ENCODE measurements at regions of chr15 and their contacts with region 1.

Region 1: GRCh38 chr15:48975472-48976419 is 12.0 kb upstream of the SHC4 start:
- DNase-seq: peak; percentile 82
- ATAC-seq: peak; percentile 99
- H3K4me3 Mint-ChIP-seq: peak overlapping the region; percentile 58
- H3K27ac Mint-ChIP-seq: peak overlapping the region; percentile 51
- H3K4me1 Mint-ChIP-seq: peaks cover 11% of the 10 kb centered on the region
- H3K27me3 Mint-ChIP-seq: peaks cover 14% of the 10 kb centered on the region

Region 2: DNA sequence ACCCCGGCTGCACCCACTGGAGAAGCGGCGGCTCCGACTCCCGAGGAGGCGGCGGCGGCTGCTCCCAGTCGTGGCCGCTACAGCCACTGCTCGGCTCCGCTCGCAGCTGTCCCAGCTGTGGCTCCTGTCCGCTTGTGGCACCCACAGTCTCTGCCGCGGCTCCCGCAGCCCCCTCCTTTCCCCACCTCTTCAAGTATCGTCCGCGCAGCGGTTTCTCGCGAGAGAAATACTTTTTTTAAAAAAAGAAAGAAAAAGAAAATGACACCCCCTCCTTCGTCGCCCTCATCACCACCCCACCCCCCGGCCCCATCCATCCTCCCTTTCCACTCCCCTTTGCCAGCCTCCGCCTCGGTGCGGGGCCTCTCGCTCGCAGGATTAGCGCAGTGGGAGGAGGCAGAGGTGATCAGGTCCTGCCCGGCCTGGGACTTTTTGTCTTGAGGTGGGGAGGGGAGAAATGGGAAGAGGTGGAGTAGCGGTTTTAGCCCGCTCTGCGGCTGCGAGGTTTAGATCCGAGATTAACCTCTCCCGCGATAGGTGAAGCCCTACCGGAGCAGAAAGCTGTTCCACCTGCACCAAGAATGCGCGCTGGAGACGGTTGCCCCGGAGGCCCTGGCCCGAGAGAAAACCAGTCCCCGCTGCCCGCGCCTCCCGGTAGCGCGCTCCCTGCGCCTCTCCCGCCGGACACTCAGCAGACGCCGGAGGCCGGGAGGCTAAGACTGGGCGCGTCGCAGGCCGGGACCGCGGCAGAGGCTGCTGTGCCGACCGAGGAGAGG is 330.0 kb before region 1 on chr15 and contains the start of gene FBN1:
- CTCF ChIA-PET with region 1: no interaction called
- POLR2A ChIA-PET with region 1: no interaction called
- DNase-seq: peak; percentile 55
- ATAC-seq: peak; percentile 79
- H3K4me3 Mint-ChIP-seq: peak within 1 kb of the TSS; percentile 70
- H3K27ac Mint-ChIP-seq: no peak within 1 kb of the TSS
- H3K4me1 Mint-ChIP-seq: peaks cover 2% of the 10 kb centered on the region
- H3K27me3 Mint-ChIP-seq: peaks cover 51% of the 10 kb centered on the region
- total RNA-seq, gene FBN1: 0.81 to 1.3 TPM

Region 3: DNA sequence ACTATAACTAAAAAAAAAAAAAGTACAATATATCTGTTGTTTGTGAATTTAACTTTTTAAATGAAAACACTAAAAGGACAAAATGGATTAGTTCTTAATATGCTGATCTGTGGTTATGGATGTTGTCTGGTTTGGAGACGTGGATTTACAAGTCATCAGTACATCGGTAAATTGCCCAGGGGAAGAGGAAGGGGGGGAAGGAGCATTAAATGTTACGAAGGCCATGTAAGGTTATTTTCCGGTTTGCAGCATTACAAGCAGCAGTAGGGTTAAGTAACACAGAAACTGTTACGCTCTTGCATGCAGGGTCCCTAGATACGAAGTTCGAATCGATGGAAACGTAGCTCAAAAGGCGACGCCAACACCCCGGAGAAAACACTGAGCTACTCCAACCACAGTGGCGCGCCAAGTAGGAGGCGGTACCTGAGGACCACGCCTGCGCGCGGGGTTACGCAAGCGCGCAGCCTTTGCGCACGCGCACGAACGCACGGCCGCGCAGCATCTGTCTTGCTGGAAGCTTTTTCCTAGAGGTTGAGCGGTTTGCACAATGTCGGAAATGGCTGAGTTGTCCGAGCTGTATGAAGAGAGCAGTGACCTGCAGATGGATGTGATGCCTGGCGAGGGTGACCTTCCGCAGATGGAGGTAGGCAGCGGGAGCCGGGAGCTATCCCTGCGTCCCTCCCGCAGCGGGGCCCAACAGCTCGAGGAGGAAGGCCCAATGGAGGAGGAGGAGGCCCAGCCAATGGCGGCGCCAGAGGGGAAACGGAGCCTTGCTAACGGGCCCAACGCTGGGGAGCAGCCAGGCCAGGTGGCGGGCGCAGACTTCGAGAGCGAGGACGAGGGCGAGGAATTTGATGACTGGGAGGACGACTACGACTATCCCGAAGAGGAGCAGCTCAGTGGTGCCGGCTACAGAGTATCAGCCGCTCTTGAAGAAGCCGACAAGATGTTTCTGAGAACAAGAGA is 97.8 kb before region 1 on chr15 and contains the start of gene EID1:
- CTCF ChIA-PET with region 1: interaction called, 53 read pairs
- POLR2A ChIA-PET with region 1: interaction called, 23 read pairs
- DNase-seq: peak; percentile 95
- ATAC-seq: peak; percentile 96
- H3K4me3 Mint-ChIP-seq: peak within 1 kb of the TSS; percentile 99
- H3K27ac Mint-ChIP-seq: peak within 1 kb of the TSS; percentile 100
- H3K4me1 Mint-ChIP-seq: peaks cover 25% of the 10 kb centered on the region
- H3K27me3 Mint-ChIP-seq: peaks cover 8% of the 10 kb centered on the region
- total RNA-seq, gene EID1: 85.3 to 89.5 TPM

Region 4: GRCh38 chr15:48946088-48946839 is 29.5 kb before region 1 on chr15:
- CTCF ChIA-PET with region 1: interaction called, 20 read pairs
- POLR2A ChIA-PET with region 1: no interaction called
- DNase-seq: no peak
- ATAC-seq: no peak
- H3K4me3 Mint-ChIP-seq: no peak overlapping the region
- H3K27ac Mint-ChIP-seq: no peak overlapping the region
- H3K4me1 Mint-ChIP-seq: peaks cover 15% of the 10 kb centered on the region
- H3K27me3 Mint-ChIP-seq: peaks cover 15% of the 10 kb centered on the region

Region 5: DNA sequence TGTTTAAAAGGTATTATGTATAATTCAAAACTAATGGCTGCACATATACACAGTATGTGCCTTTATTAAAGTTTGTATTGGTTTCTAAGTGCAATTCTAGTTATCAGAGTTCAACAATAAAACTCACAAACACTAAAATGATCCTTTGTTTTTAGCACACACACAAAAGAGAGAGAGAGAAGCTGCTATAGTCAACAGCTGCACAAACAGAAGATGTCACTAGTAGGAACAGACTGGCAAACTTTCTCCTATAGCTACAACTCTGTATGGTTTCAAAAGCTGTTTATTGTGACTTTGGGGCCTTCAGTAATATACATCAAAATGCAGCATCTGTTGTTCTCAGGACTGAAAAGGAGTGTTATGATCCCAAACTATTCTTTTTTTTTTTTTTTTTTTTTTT is 64.4 kb after region 1 on chr15:
- CTCF ChIA-PET with region 1: interaction called, 15 read pairs
- POLR2A ChIA-PET with region 1: no interaction called
- DNase-seq: no peak
- ATAC-seq: no peak
- H3K4me3 Mint-ChIP-seq: no peak overlapping the region
- H3K27ac Mint-ChIP-seq: no peak overlapping the region
- H3K4me1 Mint-ChIP-seq: peaks cover 20% of the 10 kb centered on the region
- H3K27me3 Mint-ChIP-seq: no peaks in the 10 kb centered on the region

Region 6: GRCh38 chr15:49145651-49146609 is 170.2 kb after region 1 on chr15:
- CTCF ChIA-PET with region 1: interaction called, 25 read pairs
- POLR2A ChIA-PET with region 1: interaction called, 3 read pairs
- DNase-seq: peak; percentile 53
- ATAC-seq: peak; percentile 55
- H3K4me3 Mint-ChIP-seq: no peak overlapping the region
- H3K27ac Mint-ChIP-seq: no peak overlapping the region
- H3K4me1 Mint-ChIP-seq: peaks cover 21% of the 10 kb centered on the region
- H3K27me3 Mint-ChIP-seq: no peaks in the 10 kb centered on the region

Region 7: GRCh38 chr15:49235446-49236124 is 259.8 kb after region 1 on chr15:
- CTCF ChIA-PET with region 1: interaction called, 12 read pairs
- POLR2A ChIA-PET with region 1: no interaction called
- DNase-seq: peak; percentile 75
- ATAC-seq: peak; percentile 86
- H3K4me3 Mint-ChIP-seq: no peak overlapping the region
- H3K27ac Mint-ChIP-seq: peak overlapping the region; percentile 72
- H3K4me1 Mint-ChIP-seq: peaks cover 16% of the 10 kb centered on the region
- H3K27me3 Mint-ChIP-seq: no peaks in the 10 kb centered on the region